ENCODE measurements at regions of chr1 and their contacts with region 1.

Region 1: DNA sequence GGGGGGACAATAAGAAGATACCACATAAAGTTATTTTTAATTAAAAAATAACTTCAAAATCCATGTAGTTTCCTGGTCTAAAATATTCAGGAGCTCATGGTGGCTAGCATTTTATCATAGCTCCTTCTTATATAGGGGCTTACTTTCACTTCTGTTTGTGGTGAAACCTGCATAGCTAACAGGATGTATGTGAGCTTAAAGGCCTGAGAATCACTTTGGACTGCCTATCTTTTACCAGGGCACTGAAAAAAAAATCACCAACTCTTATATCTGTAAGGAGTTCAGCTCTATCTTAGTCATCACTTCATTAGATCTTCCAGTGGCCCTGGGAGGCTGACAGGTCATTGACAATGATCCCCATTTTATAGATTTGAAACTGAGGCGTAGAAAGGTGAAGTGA is 21.3 kb downstream of the UROD start:
- DNase-seq: no peak
- H3K4me3 ChIP-seq: no peak overlapping the region
- H3K27ac ChIP-seq: no peak overlapping the region
- H3K4me1 ChIP-seq: no peaks in the 10 kb centered on the region
- H3K27me3 ChIP-seq: no peaks in the 10 kb centered on the region
- CTCF ChIP-seq: no peak
- POLR2A ChIP-seq: no peak

Region 2: GRCh38 chr1:45018599-45019230 is 14.6 kb before region 1 on chr1:
- CTCF ChIA-PET with region 1: interaction called, 11 read pairs
- POLR2A ChIA-PET with region 1: no interaction called
- dilution Hi-C with region 1: no loop called
- intact Hi-C with region 1: no loop called
- DNase-seq: peak; percentile 63
- H3K4me3 ChIP-seq: no peak overlapping the region
- H3K27ac ChIP-seq: no peak overlapping the region
- H3K4me1 ChIP-seq: peaks cover 3% of the 10 kb centered on the region
- H3K27me3 ChIP-seq: no peaks in the 10 kb centered on the region
- CTCF ChIP-seq: peak; percentile 78 to 93
- POLR2A ChIP-seq: no peak

Region 3: GRCh38 chr1:45205910-45206721 is 172.8 kb after region 1 on chr1 and contains the start of gene ZSWIM5:
- CTCF ChIA-PET with region 1: no interaction called
- POLR2A ChIA-PET with region 1: no interaction called
- dilution Hi-C with region 1: no loop called
- intact Hi-C with region 1: no loop called
- DNase-seq: peak; percentile 65
- H3K4me3 ChIP-seq: peak within 1 kb of the TSS; percentile 53 to 96 (median 72)
- H3K27ac ChIP-seq: no peak within 1 kb of the TSS
- H3K4me1 ChIP-seq: peaks cover 9% of the 10 kb centered on the region
- H3K27me3 ChIP-seq: no peaks in the 10 kb centered on the region
- CTCF ChIP-seq: no peak
- POLR2A ChIP-seq: no peak
- total RNA-seq, gene ZSWIM5: 1.6 and 1.7 TPM in 2 replicates